GM12878 (cell line): ENCODE measurements at regions of chr7 and their contacts with region 1.

Region 1: DNA sequence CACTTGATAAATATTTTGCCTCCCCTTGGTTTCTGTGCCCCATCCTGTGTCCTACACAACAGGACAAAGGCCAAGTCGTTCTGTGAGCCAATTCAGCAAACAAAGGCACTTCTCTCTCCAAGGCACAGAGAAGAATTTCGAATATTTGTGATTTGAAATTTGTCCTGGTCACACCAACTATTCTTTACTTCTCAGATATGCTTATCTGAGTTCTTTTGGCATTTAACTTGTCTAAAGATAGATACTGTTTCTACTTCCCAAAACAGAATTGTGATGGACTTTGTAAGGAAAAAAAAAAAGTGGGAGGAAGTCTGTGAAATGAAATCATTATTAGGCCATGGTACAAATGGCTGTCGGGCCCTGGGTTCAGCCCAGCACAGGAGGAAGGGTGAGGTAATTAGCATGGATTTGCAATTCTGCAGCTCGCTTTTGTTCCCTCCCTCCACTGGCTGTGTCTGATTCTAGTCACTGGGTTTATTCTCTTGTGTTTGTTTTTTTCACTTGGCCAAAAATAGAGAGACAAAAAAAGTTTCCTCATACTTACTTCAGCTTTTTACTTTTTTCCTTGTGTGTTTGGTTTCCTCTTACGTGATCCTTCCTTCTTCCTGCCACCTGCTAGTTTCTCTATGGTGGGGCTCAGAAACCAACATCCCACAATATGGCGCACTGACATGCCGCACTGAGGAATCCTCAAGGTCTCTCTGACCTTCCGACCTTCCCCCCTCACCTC is 108.2 kb upstream of the MKLN1 start:
- DNase-seq: no peak
- ATAC-seq: peak; percentile 64
- H3K4me3 ChIP-seq: no peak overlapping the region
- H3K27ac ChIP-seq: peak overlapping the region; percentile 24
- H3K4me1 ChIP-seq: peaks cover 18% of the 10 kb centered on the region
- H3K27me3 ChIP-seq: no peaks in the 10 kb centered on the region
- CTCF ChIP-seq: no peak
- EP300 ChIP-seq: peak in 1 of 2 experiments; percentile 25; a peak in 1 of 4 replicates
- POLR2A ChIP-seq: no peak
- RAD21 ChIP-seq: no peak

Region 2: GRCh38 chr7:131188367-131189339 is 30.8 kb before region 1 on chr7:
- CTCF ChIA-PET with region 1: no interaction called
- POLR2A ChIA-PET with region 1: no interaction called
- RAD21 ChIA-PET with region 1: interaction called, 4 read pairs
- SMC1A ChIA-PET with region 1: interaction called, 4 read pairs
- in situ Hi-C with region 1: no loop called
- intact Hi-C with region 1: loop called (anchors 2 kb)
- DNase-seq: peak; percentile 61
- ATAC-seq: peak; percentile 97
- H3K4me3 ChIP-seq: no peak overlapping the region
- H3K27ac ChIP-seq: no peak overlapping the region
- H3K4me1 ChIP-seq: peaks cover 13% of the 10 kb centered on the region
- H3K27me3 ChIP-seq: no peaks in the 10 kb centered on the region
- CTCF ChIP-seq: no peak
- EP300 ChIP-seq: peak in 1 of 2 experiments; percentile 58; a peak in 1 of 4 replicates
- POLR2A ChIP-seq: no peak
- RAD21 ChIP-seq: no peak

Region 3: GRCh38 chr7:131292141-131292905 is 72.8 kb after region 1 on chr7:
- CTCF ChIA-PET with region 1: no interaction called
- POLR2A ChIA-PET with region 1: no interaction called
- RAD21 ChIA-PET with region 1: no interaction called
- SMC1A ChIA-PET with region 1: no interaction called
- in situ Hi-C with region 1: no loop called
- intact Hi-C with region 1: no loop called
- DNase-seq: no peak
- ATAC-seq: no peak
- H3K4me3 ChIP-seq: no peak overlapping the region
- H3K27ac ChIP-seq: no peak overlapping the region
- H3K4me1 ChIP-seq: no peaks in the 10 kb centered on the region
- H3K27me3 ChIP-seq: no peaks in the 10 kb centered on the region
- CTCF ChIP-seq: no peak
- EP300 ChIP-seq: no peak
- POLR2A ChIP-seq: no peak
- RAD21 ChIP-seq: no peak